ENCODE measurements at regions of chr1 and their contacts with region 1.

Region 1: DNA sequence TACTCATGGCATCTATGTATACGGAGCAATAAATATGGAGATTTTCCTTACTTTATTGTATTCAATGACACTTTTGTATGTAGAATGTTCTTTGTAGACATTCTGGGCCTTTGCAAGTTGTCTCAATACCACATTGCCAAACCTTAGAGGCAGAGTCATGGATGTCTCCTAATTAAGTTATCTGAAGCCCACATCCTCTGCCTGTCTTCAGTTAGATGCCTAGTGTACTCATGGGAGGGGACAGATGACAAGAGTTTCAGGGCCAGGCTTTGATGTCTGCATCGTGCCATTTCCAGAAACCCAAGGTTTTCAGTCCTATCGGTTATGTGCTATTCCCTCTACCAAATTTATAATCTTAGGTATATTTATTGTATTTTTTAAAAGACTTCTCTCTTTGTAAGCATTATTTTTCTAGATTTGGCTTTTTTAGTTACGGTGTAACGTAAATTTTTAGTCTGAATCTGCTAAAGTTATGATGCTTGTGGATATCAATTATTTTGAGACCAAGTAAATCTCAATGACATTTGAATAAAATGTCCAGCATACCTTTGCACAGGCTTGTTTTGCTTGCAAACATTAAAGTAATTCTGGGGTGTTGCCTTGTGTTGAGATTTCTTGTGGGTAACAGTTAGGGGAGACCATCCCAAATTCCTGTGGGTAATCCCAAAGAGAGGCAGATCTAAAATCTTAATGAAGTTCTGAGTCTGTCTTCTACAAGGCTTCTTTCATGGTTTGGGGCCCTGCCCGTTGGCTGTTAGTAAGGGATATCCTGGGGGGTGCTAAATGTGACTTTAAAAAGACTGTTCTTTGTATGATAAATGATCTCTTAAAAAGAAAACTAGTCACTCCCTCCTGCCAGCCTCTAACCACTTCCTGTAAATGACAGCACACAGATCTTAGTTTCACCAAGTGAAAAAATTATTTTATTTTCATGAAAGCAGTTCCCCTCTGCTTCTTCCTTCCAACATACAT is 8.0 kb upstream of the MACF1 start:
- DNase-seq: peak; percentile 77 to 89 (median 85)
- H3K4me3 ChIP-seq: peak overlapping the region; percentile 17 to 28
- H3K4me3 Mint-ChIP-seq: peak overlapping the region; percentile 50 to 88 (median 70)
- H3K27ac ChIP-seq: peak overlapping the region; percentile 55
- H3K27ac Mint-ChIP-seq: peak overlapping the region; percentile 91 to 96 (median 93)
- H3K4me1 ChIP-seq: peaks cover 85% of the 10 kb centered on the region
- H3K4me1 Mint-ChIP-seq: peaks cover 60 to 90% (median 73%) of the 10 kb centered on the region in 4 donors
- H3K27me3 ChIP-seq: no peaks in the 10 kb centered on the region
- H3K27me3 Mint-ChIP-seq: no peaks in the 10 kb centered on the region

Region 2: GRCh38 chr1:39098546-39099250 is 97.8 kb before region 1 on chr1:
- CTCF ChIA-PET with region 1: interaction called, 94 read pairs
- POLR2A ChIA-PET with region 1: interaction called, 7 read pairs
- intact Hi-C with region 1: loop called (anchors 1 kb)
- DNase-seq: peak; percentile 69 to 83 (median 77)
- H3K4me3 ChIP-seq: no peak overlapping the region
- H3K4me3 Mint-ChIP-seq: peak overlapping the region in 2 of 8 donors; percentile 2 to 20
- H3K27ac ChIP-seq: no peak overlapping the region
- H3K27ac Mint-ChIP-seq: peak overlapping the region in 6 of 7 donors; percentile 3 to 90 (median 74)
- H3K4me1 ChIP-seq: peaks cover 14% of the 10 kb centered on the region
- H3K4me1 Mint-ChIP-seq: peaks cover 11 to 29% (median 15%) of the 10 kb centered on the region in 4 donors
- H3K27me3 ChIP-seq: no peaks in the 10 kb centered on the region
- H3K27me3 Mint-ChIP-seq: no peaks in the 10 kb centered on the region

Region 3: DNA sequence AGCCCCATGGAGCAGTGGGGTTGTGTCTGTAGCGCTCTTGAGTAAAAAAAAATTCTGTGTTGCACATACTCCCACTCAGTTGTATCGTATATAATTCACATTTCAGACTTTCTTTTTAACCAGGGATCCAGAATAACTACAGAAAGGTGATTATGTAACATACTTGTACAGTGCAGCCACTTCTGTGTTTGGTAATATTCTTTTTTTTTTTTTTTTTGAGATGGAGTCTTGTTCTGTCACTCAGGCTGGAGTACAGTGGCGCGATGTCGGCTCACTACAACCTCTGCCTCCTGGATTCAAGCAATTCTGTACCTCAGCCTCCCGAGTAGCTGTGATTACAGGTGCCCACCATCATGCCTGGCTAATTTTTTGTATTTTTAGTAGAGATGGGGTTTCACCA is 74.5 kb before region 1 on chr1:
- CTCF ChIA-PET with region 1: no interaction called
- POLR2A ChIA-PET with region 1: no interaction called
- intact Hi-C with region 1: no loop called
- DNase-seq: no peak
- H3K4me3 ChIP-seq: no peak overlapping the region
- H3K4me3 Mint-ChIP-seq: no peak overlapping the region
- H3K27ac ChIP-seq: no peak overlapping the region
- H3K27ac Mint-ChIP-seq: no peak overlapping the region
- H3K4me1 ChIP-seq: no peaks in the 10 kb centered on the region
- H3K4me1 Mint-ChIP-seq: peaks cover 0 to 1% (median 0%) of the 10 kb centered on the region in 4 donors
- H3K27me3 ChIP-seq: no peaks in the 10 kb centered on the region
- H3K27me3 Mint-ChIP-seq: no peaks in the 10 kb centered on the region

Region 4: DNA sequence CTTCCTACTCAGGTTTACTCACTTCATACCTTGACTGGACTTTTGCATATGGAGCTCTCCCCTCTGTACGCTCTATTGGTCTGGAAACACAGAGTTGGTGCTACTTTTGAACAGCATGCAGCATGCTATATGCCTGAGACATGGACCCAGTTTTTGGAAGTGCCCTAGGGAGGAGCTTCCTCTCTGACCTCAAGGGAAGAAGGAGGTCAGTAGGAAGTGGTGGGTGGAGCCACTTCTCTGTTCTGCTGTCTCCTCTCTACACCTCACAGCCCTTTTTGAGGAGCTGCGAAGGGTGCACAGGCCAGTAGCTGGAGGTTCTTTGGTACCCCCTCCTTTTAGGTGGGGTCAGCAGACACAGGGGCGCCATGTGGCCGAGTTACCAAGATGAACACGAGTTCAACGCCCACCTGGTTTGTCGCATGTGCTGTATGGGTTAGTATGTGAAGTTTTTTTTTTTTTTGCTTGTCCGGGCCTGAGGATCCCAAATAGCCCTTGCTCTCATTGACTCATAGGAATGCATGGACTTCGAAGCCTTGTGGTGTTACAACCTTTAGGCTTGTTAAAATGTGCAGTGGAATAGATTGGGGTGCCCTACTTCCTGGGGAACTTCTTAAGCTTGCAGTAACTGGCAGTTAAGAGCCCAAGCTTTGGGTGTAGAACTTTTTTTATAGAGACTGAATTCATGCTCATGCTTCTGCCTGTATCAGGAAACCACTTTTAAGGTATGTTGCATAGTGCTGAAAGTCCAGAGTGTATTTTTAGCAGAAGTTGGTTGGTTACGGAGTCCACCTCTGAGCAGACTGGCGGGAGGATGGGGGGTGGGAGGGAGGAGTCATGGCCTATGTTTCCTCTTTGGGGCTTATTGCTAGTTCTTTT is 18.7 kb after region 1 on chr1:
- CTCF ChIA-PET with region 1: interaction called, 186 read pairs
- POLR2A ChIA-PET with region 1: interaction called, 163 read pairs
- intact Hi-C with region 1: loop called (anchors 1 kb)
- DNase-seq: peak; percentile 34 to 70 (median 42)
- H3K4me3 ChIP-seq: peak overlapping the region; percentile 65 to 69
- H3K4me3 Mint-ChIP-seq: peak overlapping the region; percentile 92 to 99 (median 94)
- H3K27ac ChIP-seq: peak overlapping the region; percentile 75
- H3K27ac Mint-ChIP-seq: peak overlapping the region; percentile 89 to 96 (median 92)
- H3K4me1 ChIP-seq: peaks cover 58% of the 10 kb centered on the region
- H3K4me1 Mint-ChIP-seq: peaks cover 34 to 71% (median 48%) of the 10 kb centered on the region in 4 donors
- H3K27me3 ChIP-seq: no peaks in the 10 kb centered on the region
- H3K27me3 Mint-ChIP-seq: no peaks in the 10 kb centered on the region

Region 5: DNA sequence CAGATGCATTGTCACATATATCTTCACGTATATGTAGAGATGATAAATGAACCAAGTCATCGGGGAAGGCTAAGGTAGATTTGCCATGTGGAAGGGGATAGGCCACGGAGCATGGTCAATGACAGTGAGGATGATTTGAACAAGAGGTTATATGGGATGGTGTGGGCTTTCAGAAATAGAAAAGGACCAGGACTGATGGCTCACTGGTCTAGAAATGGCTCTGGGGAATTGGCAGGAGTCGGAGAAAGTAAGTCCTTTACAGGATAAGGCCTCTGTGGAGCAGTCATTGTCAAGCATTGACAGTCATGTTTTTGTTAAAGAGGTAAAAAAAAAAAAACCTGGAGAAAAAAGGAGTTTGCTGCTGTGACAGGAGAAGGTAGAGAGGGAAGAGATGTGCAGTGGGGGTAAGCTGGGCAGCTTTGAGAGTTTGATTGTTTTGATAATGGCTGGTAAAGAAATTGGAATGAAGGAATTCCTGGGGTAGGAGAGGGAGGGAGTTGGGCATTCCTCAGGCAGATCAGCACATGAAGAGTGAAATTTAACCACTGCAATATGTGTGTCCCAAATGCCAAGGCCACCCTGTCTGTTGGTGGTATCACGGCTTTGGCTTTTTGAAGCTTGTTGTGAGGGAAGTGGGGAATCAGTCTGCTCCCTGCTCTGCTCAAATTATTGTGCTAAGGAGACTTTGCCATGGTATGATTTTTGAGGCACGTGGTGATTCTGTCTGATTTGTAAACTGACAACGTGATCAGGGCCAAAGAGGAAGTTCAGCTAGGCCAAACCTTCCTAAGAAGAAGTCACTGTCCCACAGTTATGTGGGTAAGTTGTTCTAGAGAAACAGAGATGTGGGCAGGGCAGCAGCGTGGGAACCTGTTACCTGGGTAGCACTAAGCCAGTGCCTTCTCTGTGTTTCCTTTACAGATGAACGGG is 34.0 kb after region 1 on chr1:
- CTCF ChIA-PET with region 1: interaction called, 90 read pairs
- POLR2A ChIA-PET with region 1: interaction called, 18 read pairs
- intact Hi-C with region 1: loop called (anchors 1 kb)
- DNase-seq: peak in 3 of 5 donors; percentile 20 to 47 (median 23)
- H3K4me3 ChIP-seq: no peak overlapping the region
- H3K4me3 Mint-ChIP-seq: peak overlapping the region in 7 of 8 donors; percentile 22 to 81 (median 64)
- H3K27ac ChIP-seq: peak overlapping the region; percentile 44
- H3K27ac Mint-ChIP-seq: peak overlapping the region; percentile 59 to 90 (median 86)
- H3K4me1 ChIP-seq: peaks cover 64% of the 10 kb centered on the region
- H3K4me1 Mint-ChIP-seq: peaks cover 52 to 71% (median 62%) of the 10 kb centered on the region in 4 donors
- H3K27me3 ChIP-seq: no peaks in the 10 kb centered on the region
- H3K27me3 Mint-ChIP-seq: no peaks in the 10 kb centered on the region

Region 6: DNA sequence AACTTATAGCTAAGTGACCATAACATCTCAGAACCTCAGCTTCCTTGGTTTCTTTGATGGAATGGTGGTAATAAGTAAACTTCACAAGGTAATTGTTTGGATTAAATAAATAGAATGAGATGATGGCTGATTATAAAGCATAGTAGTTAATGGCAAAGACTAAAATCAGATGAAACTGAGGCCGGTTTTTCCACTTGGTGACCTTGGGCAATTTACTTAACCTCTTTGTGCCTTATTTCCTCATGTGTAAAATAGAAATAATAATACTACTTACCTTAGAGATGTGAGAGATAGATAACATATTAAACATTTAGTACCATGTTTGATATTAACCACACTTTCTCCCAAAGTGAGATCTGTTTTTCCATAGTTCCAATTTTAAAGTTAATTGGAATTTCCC is 52.6 kb after region 1 on chr1:
- CTCF ChIA-PET with region 1: interaction called, 820 read pairs
- POLR2A ChIA-PET with region 1: interaction called, 5 read pairs
- intact Hi-C with region 1: no loop called
- DNase-seq: no peak
- H3K4me3 ChIP-seq: no peak overlapping the region
- H3K4me3 Mint-ChIP-seq: no peak overlapping the region
- H3K27ac ChIP-seq: no peak overlapping the region
- H3K27ac Mint-ChIP-seq: peak overlapping the region; percentile 17 to 85 (median 64)
- H3K4me1 ChIP-seq: peaks cover 14% of the 10 kb centered on the region
- H3K4me1 Mint-ChIP-seq: peaks cover 24 to 57% (median 37%) of the 10 kb centered on the region in 4 donors
- H3K27me3 ChIP-seq: no peaks in the 10 kb centered on the region
- H3K27me3 Mint-ChIP-seq: no peaks in the 10 kb centered on the region

Region 7: DNA sequence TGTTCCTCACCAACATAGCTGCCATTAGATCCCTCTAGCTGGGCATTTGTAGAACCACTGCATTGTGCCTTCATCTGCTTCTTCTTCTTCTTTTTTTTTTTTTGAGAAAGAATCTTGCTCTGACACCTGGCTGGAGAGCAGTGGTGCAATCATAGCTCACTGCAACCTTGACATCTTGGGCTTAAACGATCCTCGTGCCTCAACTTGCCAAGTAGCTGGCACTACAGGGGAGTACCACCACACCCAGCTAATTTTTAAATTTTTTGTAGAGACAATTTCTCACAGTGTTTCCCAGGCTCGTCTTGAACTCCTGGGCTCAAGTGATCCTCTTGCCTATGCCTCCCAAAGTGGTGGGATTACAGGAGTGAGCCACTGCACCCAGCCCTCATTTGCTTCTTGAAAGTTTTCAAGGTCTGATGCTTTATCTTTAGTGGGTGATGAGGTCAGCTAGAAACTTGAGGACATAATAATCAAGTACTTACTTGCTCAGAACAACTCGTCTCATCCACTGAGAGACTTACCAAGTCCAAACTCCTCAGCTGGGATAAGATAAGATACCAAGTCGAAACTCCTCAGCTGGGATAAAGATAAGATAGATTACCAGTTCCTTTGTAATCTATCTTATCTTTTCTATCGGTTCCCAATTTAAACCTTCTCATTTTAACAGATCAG is 79.4 kb after region 1 on chr1:
- CTCF ChIA-PET with region 1: interaction called, 36 read pairs
- POLR2A ChIA-PET with region 1: interaction called, 7 read pairs
- intact Hi-C with region 1: no loop called
- DNase-seq: no peak
- H3K4me3 ChIP-seq: no peak overlapping the region
- H3K4me3 Mint-ChIP-seq: no peak overlapping the region
- H3K27ac ChIP-seq: no peak overlapping the region
- H3K27ac Mint-ChIP-seq: peak overlapping the region in 6 of 7 donors; percentile 28 to 76 (median 64)
- H3K4me1 ChIP-seq: peaks cover 70% of the 10 kb centered on the region
- H3K4me1 Mint-ChIP-seq: peaks cover 50 to 72% (median 61%) of the 10 kb centered on the region in 4 donors
- H3K27me3 ChIP-seq: no peaks in the 10 kb centered on the region
- H3K27me3 Mint-ChIP-seq: no peaks in the 10 kb centered on the region

Measured in CD4-positive, alpha-beta memory T cell (primary cell).